Cardiac septum (tissue), 1 donor: ENCODE measurements at regions of chr1 and their contacts with region 1.

Region 1: DNA sequence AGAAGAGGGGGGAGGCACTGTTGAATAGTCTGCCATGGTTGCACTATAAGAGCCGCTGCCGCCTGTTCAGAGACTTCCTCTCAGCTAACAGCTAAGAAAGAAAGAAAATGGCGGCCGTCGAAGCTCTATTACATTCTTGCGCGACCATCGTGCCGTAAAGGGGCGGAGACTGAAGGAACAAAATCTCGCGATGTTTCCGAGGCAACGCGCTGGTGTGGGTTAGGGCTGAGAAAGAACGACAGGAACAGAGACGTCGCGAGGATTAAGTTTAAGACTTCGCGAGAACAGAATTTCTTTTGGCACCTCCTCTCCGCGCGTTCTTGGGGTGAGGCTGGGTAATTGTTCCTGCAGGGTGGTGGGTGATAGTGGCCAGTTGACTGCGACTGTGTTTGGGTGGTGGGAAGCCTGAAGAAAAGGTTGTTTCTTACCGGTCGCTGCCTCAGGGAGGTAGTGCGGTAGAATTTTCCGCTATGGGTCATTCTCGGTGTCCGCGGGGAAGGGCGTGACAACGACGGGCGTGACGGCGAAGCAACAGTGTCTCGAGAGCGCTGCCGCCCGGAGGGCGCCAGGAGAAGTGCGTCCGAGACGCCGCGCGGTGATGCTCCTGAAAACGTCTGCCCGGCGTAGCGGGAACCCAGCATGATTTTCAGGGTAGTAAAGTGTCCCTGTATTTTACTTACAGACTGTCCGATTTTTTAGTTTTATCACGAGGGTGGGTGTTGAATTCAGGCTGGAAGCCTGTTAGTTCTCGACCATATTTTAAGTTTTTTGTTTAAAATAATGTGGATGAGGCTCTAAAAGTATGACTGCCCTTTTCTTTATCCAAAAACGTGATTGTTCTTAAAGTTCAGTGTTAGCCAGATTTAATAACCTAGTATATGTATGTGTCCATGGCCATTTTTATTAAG is at the start of gene FUBP1:
- DNase-seq: peak; percentile 96
- total RNA-seq, gene FUBP1: 80.0 TPM

Region 2: DNA sequence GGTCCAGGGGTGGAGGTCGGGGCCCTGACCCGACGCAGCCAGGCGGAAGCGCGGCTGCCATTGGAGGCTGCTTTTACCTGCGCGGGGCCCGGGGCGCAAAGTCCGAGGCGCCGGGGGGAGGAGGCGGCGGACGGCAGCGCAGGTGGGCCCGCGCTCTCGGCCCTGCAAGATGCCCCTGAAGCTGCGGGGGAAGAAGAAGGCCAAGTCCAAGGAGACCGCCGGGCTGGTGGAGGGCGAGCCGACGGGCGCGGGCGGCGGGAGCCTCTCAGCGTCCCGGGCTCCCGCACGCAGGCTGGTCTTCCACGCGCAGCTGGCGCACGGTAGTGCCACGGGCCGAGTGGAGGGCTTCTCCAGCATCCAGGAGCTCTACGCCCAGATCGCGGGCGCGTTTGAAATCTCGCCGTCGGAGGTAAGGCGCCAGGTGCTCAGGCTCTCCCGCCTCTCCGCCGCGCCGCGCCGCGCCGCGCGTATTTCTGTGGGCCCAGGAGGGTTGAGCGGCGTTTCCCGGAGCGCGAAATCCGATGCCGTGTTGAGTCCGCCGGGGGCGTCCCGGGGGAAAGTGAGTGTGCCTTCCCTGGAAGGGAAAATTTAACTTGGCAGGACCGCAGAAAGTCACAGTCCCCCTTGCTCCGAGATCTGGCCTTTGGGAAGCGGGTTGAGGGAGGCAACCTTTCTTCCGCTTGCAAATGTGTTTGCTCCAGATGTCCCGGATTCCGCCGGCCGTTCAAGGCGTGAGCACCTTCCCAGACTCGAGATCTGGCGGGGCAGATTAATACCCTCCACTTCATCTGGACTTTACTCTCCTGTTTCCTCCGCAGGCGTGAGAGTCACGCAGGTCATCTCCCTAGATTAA is 66.9 kb after region 1 on chr1 and contains the start of gene GIPC2:
- intact Hi-C with region 1: loop called (anchors 2 kb)
- DNase-seq: no peak
- total RNA-seq, gene GIPC2: 4.0 TPM

Region 3: DNA sequence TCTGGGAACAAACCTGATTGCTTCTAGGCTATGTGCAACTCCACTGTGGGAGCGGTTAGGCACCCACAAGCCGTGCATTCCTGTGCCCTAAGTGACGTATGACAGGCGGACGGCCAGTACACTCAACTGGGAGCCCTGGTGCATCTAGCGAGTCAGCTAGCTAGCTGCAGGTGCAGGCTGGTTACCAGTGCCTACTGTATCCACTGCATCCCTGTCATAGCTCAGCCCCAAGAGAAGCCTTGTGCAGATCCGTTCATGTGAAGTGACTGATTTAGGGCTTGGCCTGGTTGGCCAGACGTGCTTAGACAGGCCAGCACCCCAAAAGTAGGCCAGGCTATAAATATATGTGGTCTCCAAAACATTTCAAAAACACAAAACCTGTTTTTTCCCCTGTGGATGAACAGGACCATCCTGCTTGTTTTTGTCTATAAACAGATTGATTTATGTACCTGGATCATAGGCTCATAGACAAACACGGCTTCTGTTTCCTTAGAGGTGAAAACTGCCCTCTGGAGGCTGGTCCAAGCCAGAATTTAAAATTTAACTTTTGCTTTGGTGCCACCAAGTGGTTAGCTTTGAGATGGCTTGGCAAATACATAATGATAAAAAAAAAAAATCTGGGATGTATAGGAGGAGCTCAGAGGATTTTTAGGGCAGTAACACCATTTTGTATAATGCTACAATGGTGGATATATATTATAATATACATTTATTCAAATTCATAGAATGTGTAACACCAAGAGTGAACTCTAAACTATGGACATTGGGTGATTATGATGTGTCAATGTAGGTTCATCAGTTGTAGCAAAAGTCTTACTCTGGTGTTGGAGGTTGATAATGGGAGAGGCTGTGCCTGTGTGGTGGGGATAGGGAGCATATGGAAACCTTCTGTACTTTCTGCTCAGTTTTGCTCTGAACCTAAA is 135.1 kb after region 1 on chr1:
- intact Hi-C with region 1: loop called (anchors 2 kb)
- DNase-seq: no peak